PC-9 (cell line): ENCODE measurements at regions of chr7 and their contacts with region 1.

Region 1: GRCh38 chr7:98234429-98235147 is 17.4 kb downstream of the TECPR1 start:
- DNase-seq: no peak
- H3K4me3 ChIP-seq: no peak overlapping the region
- H3K27ac ChIP-seq: no peak overlapping the region
- H3K4me1 ChIP-seq: no peaks in the 10 kb centered on the region
- H3K27me3 ChIP-seq: no peaks in the 10 kb centered on the region
- CTCF ChIP-seq: no peak

Region 2: DNA sequence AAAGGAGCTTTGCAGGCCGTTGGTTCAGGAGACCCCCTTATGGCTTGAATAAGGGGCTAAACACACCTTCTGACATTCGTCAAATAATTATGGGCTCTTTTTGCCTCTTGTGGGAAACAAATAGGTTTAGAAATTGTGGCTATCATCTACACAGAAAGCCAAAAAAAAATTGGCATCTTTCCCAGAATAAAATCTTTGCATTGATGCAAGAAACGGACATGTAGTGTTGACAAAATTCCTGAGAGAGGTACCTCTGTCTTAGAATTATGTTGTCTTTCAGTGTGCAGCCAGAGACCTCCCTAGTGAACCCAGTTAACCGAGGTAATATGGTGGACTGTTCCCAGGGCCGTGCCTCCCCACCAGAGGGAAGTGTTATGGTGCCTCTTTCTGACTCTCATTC is 833.2 kb before region 1 on chr7:
- CTCF ChIA-PET with region 1: interaction called, 10 read pairs
- POLR2A ChIA-PET with region 1: no interaction called
- intact Hi-C with region 1: no loop called
- DNase-seq: no peak
- H3K4me3 ChIP-seq: no peak overlapping the region
- H3K27ac ChIP-seq: no peak overlapping the region
- H3K4me1 ChIP-seq: no peaks in the 10 kb centered on the region
- H3K27me3 ChIP-seq: peaks cover 9% of the 10 kb centered on the region; the same call in 1 of the 2 replicates
- CTCF ChIP-seq: no peak

Region 3: GRCh38 chr7:98387544-98388224 is 153.1 kb after region 1 on chr7:
- CTCF ChIA-PET with region 1: no interaction called
- POLR2A ChIA-PET with region 1: no interaction called
- intact Hi-C with region 1: no loop called
- DNase-seq: no peak
- H3K4me3 ChIP-seq: no peak overlapping the region
- H3K27ac ChIP-seq: no peak overlapping the region
- H3K4me1 ChIP-seq: no peaks in the 10 kb centered on the region
- H3K27me3 ChIP-seq: no peaks in the 10 kb centered on the region
- CTCF ChIP-seq: no peak

Region 4: GRCh38 chr7:98870121-98870651 is 635.6 kb after region 1 on chr7:
- CTCF ChIA-PET with region 1: no interaction called
- POLR2A ChIA-PET with region 1: no interaction called
- intact Hi-C with region 1: no loop called
- DNase-seq: peak; percentile 64 to 78
- H3K4me3 ChIP-seq: no peak overlapping the region
- H3K27ac ChIP-seq: no peak overlapping the region
- H3K4me1 ChIP-seq: peaks cover 10% of the 10 kb centered on the region
- H3K27me3 ChIP-seq: no peaks in the 10 kb centered on the region
- CTCF ChIP-seq: no peak